ENCODE measurements at regions of chr1 and their contacts with region 1.

Region 1: DNA sequence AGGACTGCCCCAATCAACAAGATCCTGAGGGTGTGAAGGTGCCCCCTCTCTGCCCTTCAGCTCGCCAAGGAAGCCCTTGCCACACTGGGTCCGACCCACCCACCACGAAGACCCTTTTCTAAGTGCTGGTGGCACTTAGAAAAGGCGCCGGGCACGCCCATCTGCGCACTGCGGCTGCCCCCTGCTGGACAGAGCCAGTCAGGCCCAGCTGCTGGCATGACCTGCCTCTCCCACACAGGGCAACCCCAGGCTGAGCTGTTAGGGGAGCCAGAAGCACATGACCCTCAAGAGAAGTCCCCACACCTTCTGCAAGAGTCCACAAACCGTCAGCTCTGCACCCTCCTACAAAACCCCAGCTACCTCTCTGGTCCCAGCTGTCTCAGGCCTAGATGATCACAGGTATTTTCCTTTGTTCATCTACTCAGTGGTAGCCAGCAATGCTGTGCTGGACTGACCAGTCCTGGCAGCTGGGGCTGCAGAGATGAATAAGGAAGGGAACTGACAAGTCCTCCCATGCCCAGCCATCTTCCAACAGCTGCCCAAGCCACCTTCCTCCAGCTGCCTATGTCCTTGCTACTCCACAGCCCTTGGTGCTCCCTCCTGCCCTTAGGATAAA is 40.0 kb upstream of the ZC3H12A start:
- DNase-seq: peak; percentile 43 to 76 (median 60)
- ATAC-seq: peak; percentile 68
- H3K4me3 ChIP-seq: no peak overlapping the region
- H3K4me3 Mint-ChIP-seq: no peak overlapping the region
- H3K27ac ChIP-seq: no peak overlapping the region
- H3K27ac Mint-ChIP-seq: no peak overlapping the region
- H3K4me1 ChIP-seq: peaks cover 6% of the 10 kb centered on the region
- H3K4me1 Mint-ChIP-seq: no peaks in the 10 kb centered on the region
- H3K27me3 ChIP-seq: peaks cover 10 to 11% of the 10 kb centered on the region in 2 experiments
- H3K27me3 Mint-ChIP-seq: peaks cover 28% of the 10 kb centered on the region
- CTCF ChIP-seq: peak; percentile 83

Region 2: DNA sequence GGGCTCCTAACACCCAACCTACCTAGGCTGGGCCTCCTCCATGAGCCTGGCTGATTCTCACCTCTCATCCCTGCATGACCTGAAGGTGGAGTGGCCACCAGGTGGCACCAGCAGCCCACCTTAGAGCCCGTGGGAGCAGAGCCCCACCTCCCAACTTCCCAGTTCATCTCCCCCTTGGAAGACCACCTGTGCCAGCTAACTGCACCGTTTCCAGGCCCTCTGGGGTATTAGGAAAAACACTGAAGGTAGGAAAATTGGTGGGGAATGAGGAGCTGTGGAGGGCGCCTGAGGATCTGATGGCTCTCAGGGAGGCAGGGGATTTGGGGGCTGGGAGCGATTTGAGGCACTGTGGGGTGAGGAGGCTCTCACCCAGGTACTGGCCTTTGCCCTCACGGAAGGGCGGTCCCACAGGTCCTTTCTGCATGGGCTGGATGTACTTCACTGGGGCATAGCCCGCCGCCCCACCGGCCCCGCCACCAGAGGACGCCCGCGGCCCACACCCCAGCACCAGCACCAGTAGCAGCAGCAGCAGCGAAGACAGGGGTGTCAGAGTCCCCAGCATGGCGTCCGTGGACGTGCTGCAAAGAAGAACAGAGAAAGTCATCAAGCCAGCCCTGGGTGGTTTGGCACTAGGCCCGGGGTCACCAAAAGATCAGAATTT is 1334.6 kb before region 1 on chr1:
- CTCF ChIA-PET with region 1: no interaction called
- POLR2A ChIA-PET with region 1: no interaction called
- intact Hi-C with region 1: loop called in 1 of 2 experiments (anchors 10 kb)
- DNase-seq: peak; percentile 61 to 84 (median 71)
- ATAC-seq: peak; percentile 89
- H3K4me3 ChIP-seq: no peak overlapping the region
- H3K4me3 Mint-ChIP-seq: no peak overlapping the region
- H3K27ac ChIP-seq: no peak overlapping the region
- H3K27ac Mint-ChIP-seq: no peak overlapping the region
- H3K4me1 ChIP-seq: peaks cover 12% of the 10 kb centered on the region
- H3K4me1 Mint-ChIP-seq: no peaks in the 10 kb centered on the region
- H3K27me3 ChIP-seq: no peaks in the 10 kb centered on the region
- H3K27me3 Mint-ChIP-seq: no peaks in the 10 kb centered on the region
- CTCF ChIP-seq: peak; percentile 91

Region 3: GRCh38 chr1:36450270-36450918 is 984.0 kb before region 1 on chr1 and contains the start of gene OSCP1:
- CTCF ChIA-PET with region 1: no interaction called
- POLR2A ChIA-PET with region 1: no interaction called
- intact Hi-C with region 1: loop called in 1 of 2 experiments (anchors 5 kb)
- DNase-seq: peak; percentile 63 to 94 (median 80)
- ATAC-seq: peak; percentile 92
- H3K4me3 ChIP-seq: peak within 1 kb of the TSS; percentile 83
- H3K4me3 Mint-ChIP-seq: peak within 1 kb of the TSS; percentile 95
- H3K27ac ChIP-seq: peak within 1 kb of the TSS; percentile 82 to 89
- H3K27ac Mint-ChIP-seq: peak within 1 kb of the TSS; percentile 91
- H3K4me1 ChIP-seq: peaks cover 15% of the 10 kb centered on the region
- H3K4me1 Mint-ChIP-seq: peaks cover 23% of the 10 kb centered on the region
- H3K27me3 ChIP-seq: no peaks in the 10 kb centered on the region
- H3K27me3 Mint-ChIP-seq: no peaks in the 10 kb centered on the region
- CTCF ChIP-seq: no peak
- total RNA-seq, gene OSCP1: 0.82 to 2.4 TPM

Region 4: DNA sequence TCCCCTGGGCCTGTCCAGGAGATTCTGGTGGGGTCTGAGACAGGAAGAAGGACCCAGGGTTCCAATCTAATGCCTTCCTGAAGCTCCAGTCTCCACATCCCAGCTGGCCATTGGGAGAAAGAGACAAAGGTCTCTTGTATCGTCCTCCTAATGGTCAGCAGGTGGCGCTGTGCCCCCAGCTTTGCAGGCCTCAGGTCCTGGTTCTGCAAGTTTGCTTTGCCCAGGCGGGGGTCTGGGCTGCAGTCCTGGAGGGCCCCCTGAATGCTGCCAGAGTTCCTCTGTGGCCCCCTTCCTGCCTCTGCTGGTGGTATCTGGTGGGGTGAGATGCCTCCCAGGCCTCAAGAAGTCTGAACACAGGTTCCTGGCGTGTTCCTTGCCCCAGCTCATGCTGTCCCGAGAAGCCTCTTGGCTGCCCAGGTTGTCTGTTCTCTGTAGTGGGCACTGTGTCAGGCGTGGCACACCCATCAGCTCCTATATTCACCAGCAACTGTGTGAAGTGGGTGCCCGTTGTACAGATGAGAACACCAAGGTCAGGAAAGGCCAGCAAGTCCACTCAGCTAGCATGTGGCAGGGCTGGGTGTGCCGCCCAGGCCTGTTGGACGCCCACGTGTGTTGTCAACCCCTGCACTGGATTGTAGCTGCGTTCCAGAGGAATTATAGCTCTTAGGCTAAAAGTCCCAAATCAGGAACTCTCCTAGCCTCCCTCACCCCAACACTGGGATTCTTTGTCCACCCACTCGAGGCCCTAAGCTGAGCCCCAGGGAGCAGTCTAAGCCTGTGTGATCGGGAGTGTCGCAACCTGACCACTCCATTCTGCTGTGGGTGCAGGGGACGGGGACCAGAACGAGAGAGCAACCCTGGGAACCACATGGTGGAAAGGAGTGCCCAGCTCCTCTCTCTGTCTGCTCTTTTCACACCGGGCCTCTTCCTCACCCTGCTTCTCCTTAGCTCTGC is 917.8 kb before region 1 on chr1:
- CTCF ChIA-PET with region 1: interaction called, 5 read pairs
- POLR2A ChIA-PET with region 1: no interaction called
- intact Hi-C with region 1: loop called in 1 of 2 experiments (anchors 2 kb)
- DNase-seq: peak in 13 of 14 experiments; percentile 5 to 74 (median 26)
- ATAC-seq: no peak
- H3K4me3 ChIP-seq: no peak overlapping the region
- H3K4me3 Mint-ChIP-seq: no peak overlapping the region
- H3K27ac ChIP-seq: no peak overlapping the region
- H3K27ac Mint-ChIP-seq: no peak overlapping the region
- H3K4me1 ChIP-seq: no peaks in the 10 kb centered on the region
- H3K4me1 Mint-ChIP-seq: no peaks in the 10 kb centered on the region
- H3K27me3 ChIP-seq: no peaks in the 10 kb centered on the region
- H3K27me3 Mint-ChIP-seq: no peaks in the 10 kb centered on the region
- CTCF ChIP-seq: peak; percentile 75

Region 5: GRCh38 chr1:36553591-36554322 is 880.6 kb before region 1 on chr1:
- CTCF ChIA-PET with region 1: interaction called, 3 read pairs
- POLR2A ChIA-PET with region 1: no interaction called
- intact Hi-C with region 1: loop called (anchors 1 to 5 kb)
- DNase-seq: peak; percentile 42 to 78 (median 52)
- ATAC-seq: no peak
- H3K4me3 ChIP-seq: no peak overlapping the region
- H3K4me3 Mint-ChIP-seq: no peak overlapping the region
- H3K27ac ChIP-seq: no peak overlapping the region
- H3K27ac Mint-ChIP-seq: no peak overlapping the region
- H3K4me1 ChIP-seq: peaks cover 5% of the 10 kb centered on the region
- H3K4me1 Mint-ChIP-seq: no peaks in the 10 kb centered on the region
- H3K27me3 ChIP-seq: peaks cover 24 to 25% of the 10 kb centered on the region in 2 experiments
- H3K27me3 Mint-ChIP-seq: peaks cover 53% of the 10 kb centered on the region
- CTCF ChIP-seq: peak; percentile 69

Region 6: DNA sequence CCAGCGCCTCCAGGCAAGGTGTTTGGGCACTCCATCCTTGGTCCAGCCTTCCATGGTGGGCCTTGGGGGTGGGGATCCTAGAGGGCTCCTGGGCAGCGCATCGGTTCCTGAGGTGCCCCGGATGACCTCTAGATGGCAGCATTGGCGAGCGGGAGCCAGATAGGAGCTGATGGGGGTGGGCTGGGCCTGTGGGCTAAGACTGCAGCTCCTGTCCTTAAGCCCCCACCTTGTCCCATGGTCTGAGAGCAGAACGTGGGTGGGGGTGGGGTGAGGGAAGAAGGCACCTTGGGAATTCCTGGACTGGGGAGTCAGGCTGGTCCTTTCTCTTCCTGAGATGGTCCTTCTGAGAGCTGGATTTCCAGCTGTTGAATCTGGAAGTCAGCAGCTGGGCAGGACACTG is 858.3 kb before region 1 on chr1:
- CTCF ChIA-PET with region 1: interaction called, 11 read pairs
- POLR2A ChIA-PET with region 1: no interaction called
- intact Hi-C with region 1: loop called (anchors 2 kb)
- DNase-seq: peak; percentile 16 to 70 (median 38)
- ATAC-seq: no peak
- H3K4me3 ChIP-seq: no peak overlapping the region
- H3K4me3 Mint-ChIP-seq: no peak overlapping the region
- H3K27ac ChIP-seq: no peak overlapping the region
- H3K27ac Mint-ChIP-seq: no peak overlapping the region
- H3K4me1 ChIP-seq: no peaks in the 10 kb centered on the region
- H3K4me1 Mint-ChIP-seq: no peaks in the 10 kb centered on the region
- H3K27me3 ChIP-seq: peaks cover 4 to 19% of the 10 kb centered on the region in 2 experiments
- H3K27me3 Mint-ChIP-seq: peaks cover 53% of the 10 kb centered on the region
- CTCF ChIP-seq: peak; percentile 72